Motor neuron (in vitro differentiated cells): ENCODE measurements at regions of chr1 and their contacts with region 1.

Region 1: DNA sequence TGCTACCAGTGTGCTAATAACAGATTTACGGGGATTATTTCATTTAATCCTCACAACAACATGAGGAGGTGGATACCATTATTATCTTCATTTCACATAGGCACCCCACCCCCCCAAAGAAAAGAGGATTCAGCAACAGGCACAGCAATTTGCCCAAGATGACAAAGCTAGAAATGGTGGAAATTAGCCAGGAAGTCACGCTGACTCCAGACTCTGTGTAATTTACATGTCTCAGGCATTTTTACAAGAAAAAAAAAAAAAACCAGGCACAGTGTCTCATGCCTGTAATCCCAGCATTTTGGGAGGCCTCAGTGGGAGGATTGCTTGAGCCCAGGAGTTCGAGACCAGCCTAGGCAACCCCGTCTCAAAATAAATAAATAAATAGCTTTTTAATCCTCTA is 37.5 kb upstream of the PRDM2 start:
- ATAC-seq: peak in 4 of 8 experiments; percentile 40 to 85 (median 76)
- H3K4me3 ChIP-seq: no peak overlapping the region
- H3K27ac ChIP-seq: no peak overlapping the region
- H3K4me1 ChIP-seq: no peaks in the 10 kb centered on the region

Region 2: GRCh38 chr1:13813398-13814012 is 151.0 kb after region 1 on chr1:
- in situ Hi-C with region 1: loop called in 2 of 9 experiments (anchors 25 kb)
- ATAC-seq: peak in 4 of 8 experiments; percentile 7 to 71 (median 51)
- H3K4me3 ChIP-seq: no peak overlapping the region
- H3K27ac ChIP-seq: no peak overlapping the region
- H3K4me1 ChIP-seq: no peaks in the 10 kb centered on the region

Region 3: DNA sequence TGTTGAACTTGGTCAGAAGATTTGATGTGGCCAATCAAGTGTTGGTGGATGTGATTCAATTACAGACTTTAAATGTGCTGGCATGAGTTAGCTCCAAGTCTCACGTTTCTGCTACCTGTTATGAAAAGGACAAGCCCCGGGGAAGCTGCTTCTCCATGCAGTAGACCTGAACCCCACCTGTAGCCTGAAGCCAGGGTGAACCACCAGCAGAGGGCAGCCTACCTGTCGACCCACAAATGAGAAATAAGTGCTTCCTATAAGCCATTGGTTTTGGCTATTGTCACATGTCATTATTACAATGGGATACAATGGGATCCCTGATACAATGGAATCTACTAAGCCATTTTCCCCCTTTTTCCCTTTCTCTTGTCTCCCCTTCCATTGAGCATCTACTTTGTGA is 267.7 kb after region 1 on chr1:
- in situ Hi-C with region 1: loop called in 1 of 9 experiments (anchors 25 kb)
- ATAC-seq: no peak
- H3K4me3 ChIP-seq: no peak overlapping the region
- H3K27ac ChIP-seq: no peak overlapping the region
- H3K4me1 ChIP-seq: peaks cover 9 to 37% of the 10 kb centered on the region in 2 donors

Region 4: GRCh38 chr1:13950637-13951036 is 288.1 kb after region 1 on chr1:
- in situ Hi-C with region 1: loop called in 8 of 9 experiments (anchors 10 to 25 kb)
- ATAC-seq: no peak
- H3K4me3 ChIP-seq: no peak overlapping the region
- H3K27ac ChIP-seq: no peak overlapping the region
- H3K4me1 ChIP-seq: no peaks in the 10 kb centered on the region